ENCODE measurements at regions of chr18 and their contacts with region 1.

Region 1: DNA sequence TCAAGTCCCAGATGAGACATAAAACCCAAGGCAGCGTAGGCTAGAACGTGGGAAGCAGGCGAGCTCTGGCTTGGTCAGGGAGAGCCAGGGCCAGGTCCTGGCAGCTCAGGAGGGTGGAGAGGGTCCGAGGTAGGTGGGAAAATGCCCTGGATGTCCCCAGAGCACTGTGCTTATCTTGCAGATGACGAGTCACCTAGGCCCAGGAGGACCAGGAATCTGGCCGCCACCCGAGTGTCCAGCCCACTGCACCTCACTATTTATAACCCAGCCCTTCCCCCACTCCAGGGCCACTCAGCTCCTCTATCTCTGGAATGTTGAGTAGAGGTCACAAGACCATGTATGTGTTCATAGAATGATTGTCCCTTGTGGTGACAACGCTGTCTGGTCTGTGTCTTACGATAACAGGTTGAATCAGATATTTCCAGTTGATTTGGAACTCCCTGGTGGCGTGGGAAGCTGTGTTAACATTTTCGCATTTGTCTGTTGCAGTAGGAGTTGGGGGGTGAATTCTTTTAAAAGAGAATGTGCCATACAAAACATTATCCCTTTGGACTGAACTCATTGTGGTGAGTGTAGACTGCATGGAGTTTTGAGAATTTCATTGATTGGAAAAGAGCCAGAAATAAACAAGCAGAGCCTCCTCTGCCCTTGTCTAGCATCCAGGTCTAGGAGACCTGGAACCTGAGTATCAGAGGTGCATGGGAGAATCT is 47.5 kb downstream of the EMILIN2 start:
- DNase-seq: peak; percentile 77 to 86
- H3K4me3 ChIP-seq: no peak overlapping the region
- H3K4me3 Mint-ChIP-seq: peak overlapping the region; percentile 39
- H3K27ac Mint-ChIP-seq: peak overlapping the region; percentile 90
- H3K4me1 ChIP-seq: peaks cover 34% of the 10 kb centered on the region
- H3K4me1 Mint-ChIP-seq: peaks cover 20% of the 10 kb centered on the region
- H3K27me3 ChIP-seq: no peaks in the 10 kb centered on the region
- H3K27me3 Mint-ChIP-seq: no peaks in the 10 kb centered on the region
- CTCF ChIP-seq: no peak

Region 2: DNA sequence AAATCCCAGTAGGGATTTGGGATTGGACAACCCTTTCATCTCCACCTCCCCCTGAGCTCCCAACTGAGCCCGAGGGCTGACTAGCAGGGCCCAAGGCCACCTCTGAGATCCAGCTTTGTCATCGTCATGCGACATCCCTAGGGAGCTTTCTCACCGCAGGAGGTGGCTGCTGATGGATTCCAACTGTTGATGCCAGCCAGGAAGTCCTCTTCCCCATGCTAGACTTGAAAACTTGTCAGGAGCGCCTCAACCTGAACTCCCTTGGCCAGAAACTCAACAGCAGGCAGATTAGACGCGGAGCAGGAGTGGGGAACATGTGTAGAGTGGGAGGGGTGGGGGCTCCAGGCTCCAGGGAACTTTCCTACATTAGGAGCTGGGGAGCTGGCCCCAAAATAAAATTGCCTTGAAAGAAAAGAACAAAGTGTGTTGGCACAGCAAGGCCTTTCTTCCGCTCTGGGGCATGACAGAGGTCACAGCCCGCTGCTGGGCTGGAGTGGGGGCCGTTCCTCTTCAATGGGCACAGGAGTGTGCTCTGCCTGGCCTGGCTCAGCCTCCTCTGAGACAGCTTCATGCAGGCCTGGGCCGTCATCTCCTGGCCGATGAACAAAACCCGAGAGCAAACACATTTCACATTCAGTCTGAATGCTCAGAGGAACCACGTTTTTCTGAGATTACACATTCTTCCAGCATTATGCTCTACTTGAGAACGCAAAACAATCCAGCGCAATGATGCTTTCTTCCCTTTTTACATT is 13.0 kb before region 1 on chr18:
- CTCF ChIA-PET with region 1: no interaction called
- POLR2A ChIA-PET with region 1: no interaction called
- intact Hi-C with region 1: no loop called
- DNase-seq: no peak
- H3K4me3 ChIP-seq: no peak overlapping the region
- H3K4me3 Mint-ChIP-seq: no peak overlapping the region
- H3K27ac Mint-ChIP-seq: no peak overlapping the region
- H3K4me1 ChIP-seq: peaks cover 14% of the 10 kb centered on the region
- H3K4me1 Mint-ChIP-seq: peaks cover 4% of the 10 kb centered on the region
- H3K27me3 ChIP-seq: no peaks in the 10 kb centered on the region
- H3K27me3 Mint-ChIP-seq: no peaks in the 10 kb centered on the region
- CTCF ChIP-seq: no peak

Region 3: GRCh38 chr18:2948038-2948437 is 53.8 kb after region 1 on chr18:
- CTCF ChIA-PET with region 1: interaction called, 10 read pairs
- POLR2A ChIA-PET with region 1: no interaction called
- intact Hi-C with region 1: no loop called
- DNase-seq: no peak
- H3K4me3 ChIP-seq: no peak overlapping the region
- H3K4me3 Mint-ChIP-seq: no peak overlapping the region
- H3K27ac Mint-ChIP-seq: no peak overlapping the region
- H3K4me1 ChIP-seq: no peaks in the 10 kb centered on the region
- H3K4me1 Mint-ChIP-seq: no peaks in the 10 kb centered on the region
- H3K27me3 ChIP-seq: no peaks in the 10 kb centered on the region
- H3K27me3 Mint-ChIP-seq: no peaks in the 10 kb centered on the region
- CTCF ChIP-seq: peak; percentile 21 to 53